ENCODE measurements at regions of chr2 and their contacts with region 1.

Region 1: DNA sequence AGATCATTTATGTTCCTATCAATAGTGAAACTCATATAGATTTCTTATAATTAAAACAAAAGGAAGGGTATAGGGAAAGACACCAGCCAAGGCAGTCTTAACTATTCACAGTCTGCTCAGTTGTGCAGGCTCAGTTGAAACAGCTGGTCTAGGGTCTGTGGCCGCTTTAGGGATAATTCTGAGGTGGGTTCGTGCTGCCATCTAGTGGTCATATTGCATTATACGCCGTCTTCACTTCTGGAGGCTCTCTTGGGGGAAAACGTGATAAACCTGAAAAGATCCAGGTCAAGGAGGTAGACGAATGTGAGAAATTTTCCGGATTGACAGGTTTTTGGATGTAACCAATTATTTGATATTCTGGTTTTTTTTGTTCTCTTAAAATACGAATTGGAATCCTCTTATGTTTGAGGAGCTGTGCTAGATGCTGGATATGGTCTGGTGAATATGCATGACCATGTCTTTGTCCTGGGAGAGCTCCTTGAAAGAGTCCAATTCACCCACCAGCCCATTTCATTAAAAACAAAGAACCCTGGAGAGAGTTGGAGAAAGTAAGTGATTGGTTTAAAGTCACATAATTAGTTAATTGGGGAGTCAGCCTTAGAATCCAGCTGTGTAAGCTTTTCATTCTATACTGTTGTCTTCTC is 492.4 kb downstream of the PLCL1 start:
- DNase-seq: no peak
- H3K4me3 ChIP-seq: no peak overlapping the region
- CTCF ChIP-seq: peak; percentile 67

Region 2: DNA sequence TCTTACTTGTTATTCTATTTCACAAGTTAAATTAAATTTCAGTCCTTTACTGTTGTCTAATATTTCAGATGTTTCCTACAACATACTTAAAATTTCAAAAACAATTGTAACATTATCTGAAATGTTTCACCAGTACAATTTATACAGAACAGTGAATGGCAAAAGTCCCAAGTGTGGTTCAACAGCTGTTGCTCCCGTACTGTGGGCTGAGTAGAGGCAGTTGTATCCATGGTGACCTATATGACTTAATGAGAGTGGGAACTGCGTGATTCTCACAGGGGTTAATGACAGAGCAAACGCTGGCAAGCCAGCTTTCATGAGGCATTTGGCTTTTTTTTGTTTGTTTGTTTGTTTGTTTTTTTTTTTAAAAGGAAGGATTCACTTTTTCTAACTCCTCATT is 497.7 kb before region 1 on chr2:
- CTCF ChIA-PET with region 1: interaction called, 25 read pairs
- POLR2A ChIA-PET with region 1: no interaction called
- DNase-seq: no peak
- H3K4me3 ChIP-seq: no peak overlapping the region
- CTCF ChIP-seq: no peak

Region 3: DNA sequence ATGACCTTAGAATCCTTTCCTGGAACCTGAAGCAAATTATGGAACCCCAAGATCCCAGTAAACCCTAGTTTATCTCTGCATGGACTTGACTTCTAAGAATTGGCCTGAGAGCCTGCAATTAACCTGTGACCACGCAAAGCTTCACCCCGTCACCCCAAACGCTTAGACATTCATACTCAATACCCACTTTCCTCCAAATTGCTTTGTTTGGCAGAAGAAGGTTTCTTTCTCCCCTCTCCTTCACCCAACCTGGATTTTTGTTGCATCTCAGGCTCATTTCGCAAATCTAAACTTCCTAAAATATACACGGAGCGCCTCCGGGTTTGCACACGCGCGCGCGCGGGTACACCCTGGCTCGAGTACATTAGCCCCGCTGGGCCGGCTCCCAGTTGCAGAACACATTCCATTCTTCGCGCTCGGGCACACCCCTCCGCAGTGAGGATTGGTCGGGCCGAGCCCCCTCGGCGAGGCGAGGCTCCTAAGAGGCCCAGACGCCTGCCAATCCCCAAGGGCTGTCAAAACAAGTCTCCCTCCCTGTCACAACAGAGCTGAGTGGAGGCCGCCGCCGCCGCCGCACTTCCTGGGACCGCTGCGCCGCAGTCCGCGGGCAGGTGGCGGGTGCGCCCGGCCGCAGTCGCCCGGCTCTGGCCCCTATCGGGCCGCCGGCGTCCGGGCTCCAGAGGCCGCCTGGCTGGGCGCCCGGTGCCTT is 492.6 kb before region 1 on chr2 and contains the start of gene PLCL1:
- CTCF ChIA-PET with region 1: interaction called, 25 read pairs
- POLR2A ChIA-PET with region 1: no interaction called
- DNase-seq: peak; percentile 60
- H3K4me3 ChIP-seq: peak within 1 kb of the TSS; percentile 67
- CTCF ChIP-seq: no peak

Region 4: GRCh38 chr2:198127627-198128026 is 169.2 kb before region 1 on chr2:
- CTCF ChIA-PET with region 1: interaction called, 14 read pairs
- POLR2A ChIA-PET with region 1: no interaction called
- DNase-seq: no peak
- H3K4me3 ChIP-seq: no peak overlapping the region
- CTCF ChIP-seq: peak; percentile 64

Region 5: DNA sequence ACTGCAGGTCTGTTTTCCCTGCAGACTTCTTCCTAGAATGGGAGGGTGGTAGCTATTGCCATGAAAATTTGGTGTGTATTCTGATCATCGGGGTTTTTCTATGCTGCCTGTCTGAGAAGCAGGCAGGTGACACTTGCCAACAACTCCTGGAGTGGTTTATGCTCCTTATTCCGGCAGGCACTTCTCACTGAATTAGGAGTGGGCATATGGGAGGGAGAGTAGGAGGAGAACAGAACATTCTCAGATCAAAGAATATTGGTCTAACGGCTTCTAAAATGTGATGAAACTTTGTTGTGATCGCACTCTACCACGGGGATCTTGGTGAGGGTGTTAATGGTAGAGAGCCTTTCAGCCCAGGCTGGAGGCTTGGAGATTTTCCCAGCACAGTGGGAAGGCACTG is 11.6 kb before region 1 on chr2:
- CTCF ChIA-PET with region 1: interaction called, 11 read pairs
- POLR2A ChIA-PET with region 1: no interaction called
- DNase-seq: no peak
- H3K4me3 ChIP-seq: no peak overlapping the region
- CTCF ChIP-seq: no peak

Region 6: DNA sequence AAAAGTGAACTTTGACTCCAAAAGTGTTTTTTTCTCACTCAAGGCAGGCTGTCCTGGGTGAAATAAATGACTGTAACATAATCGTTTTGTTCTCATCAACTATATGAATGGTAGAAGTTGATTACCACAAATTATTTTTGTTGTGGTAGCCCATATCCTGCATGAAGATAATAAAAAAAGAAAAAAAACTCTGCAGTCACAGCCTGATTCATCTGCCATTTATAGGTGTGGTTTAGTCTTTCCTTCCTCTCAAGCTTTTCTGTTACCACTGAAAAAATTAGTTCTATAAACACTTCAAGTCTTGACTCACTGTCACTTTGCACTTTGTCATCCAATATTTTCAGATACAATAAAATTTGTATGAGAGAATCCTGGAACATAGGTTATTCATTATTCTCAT is 29.6 kb after region 1 on chr2:
- CTCF ChIA-PET with region 1: no interaction called
- POLR2A ChIA-PET with region 1: no interaction called
- DNase-seq: no peak
- H3K4me3 ChIP-seq: no peak overlapping the region
- CTCF ChIP-seq: no peak

Measured in AG04449 (cell line).